WTC11 (cell line): ENCODE measurements at regions of chr6 and their contacts with region 1.

Region 1: GRCh38 chr6:39865011-39865888 is 69.0 kb downstream of the MOCS1 start:
- DNase-seq: peak; percentile 94
- ATAC-seq: peak; percentile 71
- H3K4me3 Mint-ChIP-seq: no peak overlapping the region
- H3K27ac Mint-ChIP-seq: no peak overlapping the region
- H3K4me1 Mint-ChIP-seq: peaks cover 41% of the 10 kb centered on the region
- H3K27me3 Mint-ChIP-seq: no peaks in the 10 kb centered on the region; the same call in 1 of the 2 replicates
- CTCF ChIP-seq: peak; percentile 93

Region 2: DNA sequence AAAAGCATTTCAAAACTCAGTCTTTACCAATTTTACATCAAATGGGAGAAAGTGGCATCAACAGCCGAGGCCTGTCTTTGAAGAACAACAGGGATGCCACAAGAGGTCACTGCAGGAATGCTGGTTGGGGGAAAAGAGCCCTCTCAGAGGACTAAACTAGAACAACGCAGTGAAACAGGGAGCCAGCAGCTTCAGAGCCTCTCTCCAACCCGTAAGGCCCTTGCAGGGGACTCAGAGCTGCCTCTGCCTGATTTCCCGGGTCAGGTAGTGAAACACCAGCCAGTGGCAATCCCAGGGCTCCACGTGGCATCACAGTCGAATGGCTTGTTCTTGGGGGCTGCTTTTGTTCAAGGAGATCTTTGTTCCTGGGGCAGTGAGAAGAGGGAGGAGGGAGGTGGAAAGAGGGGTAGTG is 487.7 kb before region 1 on chr6:
- CTCF ChIA-PET with region 1: interaction called, 21 read pairs
- POLR2A ChIA-PET with region 1: no interaction called
- DNase-seq: peak; percentile 76
- ATAC-seq: peak; percentile 99
- H3K4me3 Mint-ChIP-seq: no peak overlapping the region
- H3K27ac Mint-ChIP-seq: no peak overlapping the region
- H3K4me1 Mint-ChIP-seq: no peaks in the 10 kb centered on the region; the same call in 1 of the 2 replicates
- H3K27me3 Mint-ChIP-seq: no peaks in the 10 kb centered on the region
- CTCF ChIP-seq: peak; percentile 45

Region 3: GRCh38 chr6:39791850-39792539 is 73.3 kb before region 1 on chr6 and contains the start of gene DAAM2:
- CTCF ChIA-PET with region 1: interaction called, 20 read pairs
- POLR2A ChIA-PET with region 1: no interaction called
- DNase-seq: peak; percentile 56
- ATAC-seq: peak; percentile 78
- H3K4me3 Mint-ChIP-seq: peak within 1 kb of the TSS; percentile 75
- H3K27ac Mint-ChIP-seq: no peak within 1 kb of the TSS
- H3K4me1 Mint-ChIP-seq: peaks cover 26% of the 10 kb centered on the region
- H3K27me3 Mint-ChIP-seq: peaks cover 26% of the 10 kb centered on the region
- CTCF ChIP-seq: no peak; the same call in 1 of the 2 replicates
- total RNA-seq, gene DAAM2: 2.0 to 3.1 TPM (median 3.0 TPM) in 3 replicates

Region 4: DNA sequence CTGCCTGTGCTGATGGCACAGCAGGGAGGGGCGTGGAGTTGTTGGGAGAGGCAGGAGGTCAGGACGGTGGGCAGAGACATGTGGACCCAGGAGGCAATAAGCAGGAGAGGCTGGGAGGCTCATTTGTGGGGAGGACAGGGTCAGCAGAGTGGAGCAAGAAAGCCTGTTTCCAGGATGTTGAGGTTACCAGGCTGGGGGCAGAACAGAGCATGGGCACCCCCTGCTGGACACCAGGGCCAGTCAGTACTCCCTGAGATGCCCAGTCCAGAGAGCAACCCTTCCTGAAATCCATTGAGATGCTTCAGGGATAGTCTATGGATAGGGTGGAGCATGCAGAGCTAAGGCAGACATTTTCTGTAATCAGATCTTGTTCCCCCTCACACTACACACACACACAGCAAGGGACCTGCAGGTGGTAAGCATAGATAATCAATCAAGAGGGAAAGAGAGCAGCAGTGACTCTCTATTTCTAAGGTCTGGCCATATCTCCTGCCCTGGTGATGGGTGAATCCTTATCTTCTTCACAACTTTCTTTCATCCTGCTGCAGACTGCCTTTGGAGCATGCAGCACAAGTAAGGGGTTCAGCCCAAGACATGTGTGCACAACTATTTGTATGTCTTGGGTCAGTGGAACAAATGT is 27.4 kb after region 1 on chr6:
- CTCF ChIA-PET with region 1: interaction called, 10 read pairs
- POLR2A ChIA-PET with region 1: no interaction called
- DNase-seq: peak; percentile 74
- ATAC-seq: peak; percentile 91
- H3K4me3 Mint-ChIP-seq: no peak overlapping the region
- H3K27ac Mint-ChIP-seq: no peak overlapping the region
- H3K4me1 Mint-ChIP-seq: peaks cover 8% of the 10 kb centered on the region
- H3K27me3 Mint-ChIP-seq: no peaks in the 10 kb centered on the region; the same call in 1 of the 2 replicates
- CTCF ChIP-seq: peak; percentile 60

Region 5: GRCh38 chr6:40138273-40138720 is 273.0 kb after region 1 on chr6:
- CTCF ChIA-PET with region 1: no interaction called
- POLR2A ChIA-PET with region 1: no interaction called
- DNase-seq: no peak
- ATAC-seq: no peak
- H3K4me3 Mint-ChIP-seq: no peak overlapping the region
- H3K27ac Mint-ChIP-seq: no peak overlapping the region
- H3K4me1 Mint-ChIP-seq: no peaks in the 10 kb centered on the region
- H3K27me3 Mint-ChIP-seq: peaks cover 4% of the 10 kb centered on the region
- CTCF ChIP-seq: no peak